Activated naive CD4-positive, alpha-beta T cell treated with anti-CD3 and anti-CD28 coated beads, Interleukin-2, amount 10 ng/mL, durations not matched to agents 7 days and 5 days (primary cell): ENCODE measurements at regions of chr12 and their contacts with region 1.

Region 1: DNA sequence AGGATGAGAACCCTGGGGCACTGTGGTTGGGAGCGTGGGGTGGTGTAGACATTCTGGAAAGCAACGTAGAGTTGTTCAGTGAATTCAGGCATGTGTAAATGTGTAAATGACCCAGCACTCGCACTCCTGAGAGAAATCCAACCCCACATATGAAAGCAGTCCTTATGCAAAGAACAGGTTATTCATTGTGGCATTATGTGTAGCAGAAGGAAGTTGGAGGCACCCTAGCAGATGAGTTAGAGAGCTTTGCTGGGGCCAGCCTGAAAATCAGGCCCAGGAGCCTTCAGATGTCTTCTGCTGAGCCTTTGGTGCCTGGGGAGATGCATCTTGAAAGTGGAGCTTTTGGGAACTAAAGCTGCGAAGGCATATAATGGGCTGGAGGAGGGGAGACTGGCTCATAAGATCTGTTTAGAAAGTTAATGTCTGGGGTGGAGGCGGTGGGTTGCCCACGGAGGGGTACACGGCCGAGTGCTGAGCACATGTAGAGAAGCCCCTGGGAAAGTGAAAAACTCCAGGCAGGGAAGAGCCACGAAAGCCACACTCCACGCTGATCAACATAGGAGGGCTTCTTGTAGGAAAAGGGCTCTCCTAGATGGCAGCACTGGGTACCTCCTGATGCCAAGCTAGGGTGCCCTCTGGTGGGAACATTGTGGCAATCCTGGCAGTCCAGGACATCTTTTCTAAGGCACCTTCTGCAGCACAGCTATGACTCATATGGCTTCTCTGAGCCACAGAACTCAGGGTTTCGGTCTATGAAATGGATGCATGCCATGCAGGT is 6.0 kb upstream of the KRT83 start:
- DNase-seq: peak; percentile 88
- H3K4me3 Mint-ChIP-seq: no peak overlapping the region
- H3K27ac Mint-ChIP-seq: no peak overlapping the region
- H3K4me1 Mint-ChIP-seq: peaks cover 9% of the 10 kb centered on the region
- H3K27me3 Mint-ChIP-seq: peaks cover 51% of the 10 kb centered on the region

Region 2: DNA sequence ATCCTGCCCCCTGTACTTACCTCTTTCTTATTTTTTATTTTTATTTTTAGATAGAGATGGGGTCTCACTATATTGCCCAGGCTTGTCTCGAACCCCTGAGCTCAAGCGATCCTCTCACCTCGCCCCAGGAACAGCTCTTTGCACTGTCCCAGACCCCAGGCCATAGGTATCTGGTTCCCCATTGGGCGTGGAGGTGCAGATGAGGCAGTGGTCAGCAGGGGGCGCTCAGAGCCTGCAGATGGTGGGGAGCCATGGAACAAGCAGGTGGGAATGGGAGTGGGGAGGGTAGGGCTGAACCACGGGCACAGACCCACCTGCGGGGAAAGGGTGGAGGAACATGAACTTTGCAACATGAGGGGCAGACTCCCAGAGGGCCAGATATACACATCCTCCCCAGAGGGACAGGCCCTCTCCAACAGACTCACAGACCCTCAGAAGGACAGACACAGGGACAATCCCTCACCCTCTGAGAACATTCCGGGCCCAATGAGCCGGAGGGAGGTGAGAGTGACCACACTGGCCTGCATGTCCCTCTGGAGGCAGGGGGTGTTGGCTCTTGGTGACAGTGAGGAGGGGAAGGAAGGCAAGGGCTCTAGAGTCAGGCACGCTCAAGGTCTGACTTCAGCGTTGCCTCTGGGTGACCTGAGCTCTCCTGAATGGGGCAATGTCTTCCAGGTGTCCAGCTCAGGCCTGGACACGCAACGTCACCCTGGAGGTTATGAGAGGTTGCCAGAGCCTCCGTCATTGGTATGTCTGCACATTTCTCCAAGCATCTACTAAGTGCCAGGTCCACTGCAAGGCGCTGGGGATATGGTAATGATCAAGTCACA is 170.3 kb before region 1 on chr12:
- CTCF ChIA-PET with region 1: interaction called, 31 read pairs
- DNase-seq: peak; percentile 86
- H3K4me3 Mint-ChIP-seq: no peak overlapping the region
- H3K27ac Mint-ChIP-seq: no peak overlapping the region
- H3K4me1 Mint-ChIP-seq: peaks cover 74% of the 10 kb centered on the region
- H3K27me3 Mint-ChIP-seq: no peaks in the 10 kb centered on the region

Region 3: DNA sequence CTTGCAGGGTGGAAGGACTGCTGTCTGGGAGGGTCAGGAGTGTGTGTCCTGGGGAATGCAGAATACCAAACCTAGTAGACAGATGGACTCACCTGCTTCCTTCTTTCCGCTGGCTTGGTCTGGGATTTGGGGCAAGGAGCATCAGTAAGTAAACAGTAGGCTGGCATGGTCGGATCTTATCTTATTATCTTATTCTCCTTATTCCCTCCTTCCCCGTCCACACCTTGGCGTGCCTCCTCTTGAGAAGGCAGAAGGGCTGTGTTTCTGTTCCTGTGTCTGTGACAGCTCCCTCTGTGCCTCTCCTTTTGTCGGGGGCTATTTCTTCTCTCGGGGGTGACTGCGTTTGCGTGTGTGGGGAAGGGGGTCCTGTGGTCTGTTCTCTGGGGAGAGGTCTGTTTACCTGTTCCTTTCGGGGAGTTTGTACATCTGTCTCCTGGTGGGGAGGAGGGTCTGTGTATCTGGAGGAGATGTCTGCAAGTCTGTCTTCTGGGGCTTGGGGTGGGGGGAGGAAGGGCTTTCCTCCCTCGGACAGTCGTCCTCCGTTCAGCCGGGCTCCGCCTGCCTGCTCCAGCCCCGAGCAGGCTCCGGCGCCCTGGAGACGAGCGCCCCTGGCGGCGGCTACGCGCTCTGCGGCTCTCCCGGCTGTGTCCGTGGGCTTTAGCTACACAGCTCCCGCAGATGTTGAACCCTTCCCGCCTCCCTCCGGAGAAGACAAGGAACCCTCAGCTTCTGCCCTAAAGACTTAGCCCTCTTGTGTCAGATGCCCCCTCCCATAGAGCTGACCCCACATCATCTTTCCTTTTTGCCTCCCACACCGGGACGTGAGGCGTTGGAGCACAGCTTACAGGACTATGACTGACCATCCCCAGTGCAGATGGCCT is 48.5 kb before region 1 on chr12:
- CTCF ChIA-PET with region 1: interaction called, 15 read pairs
- DNase-seq: peak; percentile 80
- H3K4me3 Mint-ChIP-seq: no peak overlapping the region
- H3K27ac Mint-ChIP-seq: no peak overlapping the region
- H3K4me1 Mint-ChIP-seq: peaks cover 9% of the 10 kb centered on the region
- H3K27me3 Mint-ChIP-seq: peaks cover 77% of the 10 kb centered on the region

Region 4: GRCh38 chr12:52307836-52308805 is 19.1 kb before region 1 on chr12:
- CTCF ChIA-PET with region 1: interaction called, 34 read pairs
- DNase-seq: peak; percentile 68
- H3K4me3 Mint-ChIP-seq: peak overlapping the region; percentile 50
- H3K27ac Mint-ChIP-seq: no peak overlapping the region
- H3K4me1 Mint-ChIP-seq: peaks cover 28% of the 10 kb centered on the region
- H3K27me3 Mint-ChIP-seq: peaks cover 88% of the 10 kb centered on the region